Aorta (tissue), 5 donors: ENCODE measurements at regions of chr2 and their contacts with region 1.

Region 1: DNA sequence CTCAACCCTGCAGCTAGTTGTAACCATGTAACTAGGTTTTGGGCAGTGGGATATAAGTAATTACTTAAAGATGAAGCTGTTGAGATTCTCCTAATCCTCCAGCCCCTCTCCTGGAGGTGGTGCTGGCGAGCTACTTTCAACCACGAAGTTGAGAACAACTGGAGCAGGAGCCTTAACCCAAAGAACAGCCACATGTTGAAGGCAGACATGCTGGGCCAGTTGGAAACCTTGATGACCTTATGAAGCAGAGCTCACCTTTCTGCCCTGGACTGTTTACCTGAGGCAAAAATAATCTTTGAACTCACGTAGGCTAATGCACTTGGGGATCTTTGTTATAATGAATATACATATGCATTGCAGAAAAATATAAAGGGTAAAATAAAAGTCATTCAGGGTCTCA is 89.6 kb upstream of the NPAS2 start:
- DNase-seq: peak; percentile 73 to 87
- ATAC-seq: peak; percentile 44
- H3K4me3 ChIP-seq: no peak overlapping the region
- H3K27ac ChIP-seq: no peak overlapping the region
- H3K4me1 ChIP-seq: peaks cover 0 to 2% of the 10 kb centered on the region in 2 donors
- H3K27me3 ChIP-seq: no peaks in the 10 kb centered on the region

Region 2: DNA sequence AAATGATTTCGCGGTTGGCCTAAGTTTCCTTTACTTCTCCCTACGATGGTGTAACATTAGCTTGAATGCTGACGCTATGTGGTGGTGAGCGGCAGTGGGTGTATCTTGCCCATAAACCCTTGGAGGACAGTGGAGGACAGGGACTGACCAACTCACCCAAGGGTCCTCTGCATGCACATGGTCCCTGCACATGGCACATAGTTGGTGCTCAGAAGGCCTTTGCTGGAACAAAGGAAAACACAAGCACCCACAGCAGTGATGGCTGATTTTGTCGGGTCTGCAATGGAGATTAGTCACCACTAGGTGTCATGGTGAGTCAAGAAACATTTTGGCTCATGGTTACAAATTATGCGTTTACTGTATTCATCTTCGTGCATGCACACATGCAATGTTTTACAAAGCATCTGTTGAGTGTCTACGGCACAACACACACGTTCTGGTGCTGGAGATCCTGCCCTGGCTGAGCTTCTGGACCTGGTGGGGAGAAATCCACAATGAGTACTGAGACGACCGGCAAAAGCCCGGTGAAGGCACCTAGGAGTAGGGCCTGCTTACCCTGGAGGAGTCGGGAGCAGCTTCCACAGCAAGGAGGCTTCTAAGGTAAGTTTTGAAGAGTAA is 123.5 kb before region 1 on chr2:
- intact Hi-C with region 1: loop called in 1 of 2 experiments (anchors 5 kb)
- DNase-seq: no peak
- ATAC-seq: no peak
- H3K4me3 ChIP-seq: no peak overlapping the region
- H3K27ac ChIP-seq: no peak overlapping the region
- H3K4me1 ChIP-seq: no peaks in the 10 kb centered on the region
- H3K27me3 ChIP-seq: no peaks in the 10 kb centered on the region

Region 3: DNA sequence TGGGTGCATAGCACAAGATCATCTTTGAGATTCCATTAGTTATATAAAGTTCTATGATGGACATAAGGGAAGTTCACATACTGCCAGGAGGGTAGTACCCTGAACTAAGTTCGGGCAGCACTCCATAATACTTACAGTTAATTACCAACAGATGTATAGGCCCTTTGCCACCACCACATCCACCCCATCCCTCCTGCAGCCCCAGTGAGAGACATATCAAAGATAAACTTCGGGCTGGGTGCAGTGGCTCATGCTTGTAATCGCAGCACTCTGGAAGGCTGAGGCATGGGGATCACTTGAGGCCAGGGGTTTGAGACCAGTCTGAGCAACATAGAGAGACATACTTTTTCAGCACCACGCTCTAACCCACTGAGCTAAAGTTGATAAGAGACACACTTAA is 43.2 kb after region 1 on chr2:
- intact Hi-C with region 1: no loop called
- DNase-seq: no peak
- ATAC-seq: no peak
- H3K4me3 ChIP-seq: no peak overlapping the region
- H3K27ac ChIP-seq: no peak overlapping the region
- H3K4me1 ChIP-seq: no peaks in the 10 kb centered on the region
- H3K27me3 ChIP-seq: no peaks in the 10 kb centered on the region